ENCODE measurements at regions of chr13 and their contacts with region 1.

Region 1: GRCh38 chr13:52194184-52194868 is 34.9 kb upstream of the NEK3 start:
- DNase-seq: peak; percentile 79 to 92 (median 85)
- H3K4me3 ChIP-seq: peak overlapping the region; percentile 57 to 98 (median 88)
- H3K27ac ChIP-seq: peak overlapping the region; percentile 63 to 96 (median 92)
- H3K27me3 ChIP-seq: no peaks in the 10 kb centered on the region
- CTCF ChIP-seq: peak in 52 of 56 donors; percentile 11 to 67 (median 44)

Region 2: GRCh38 chr13:51814825-51815650 is 379.3 kb before region 1 on chr13:
- intact Hi-C with region 1: loop called in 1 of 2 experiments (anchors 10 kb)
- DNase-seq: peak in 4 of 10 donors; percentile 28 to 57 (median 52)
- H3K4me3 ChIP-seq: peak overlapping the region in 39 of 59 donors; percentile 3 to 48 (median 26)
- H3K27ac ChIP-seq: peak overlapping the region in 2 of 59 donors; percentile 10 to 46
- H3K27me3 ChIP-seq: no peaks in the 10 kb centered on the region
- CTCF ChIP-seq: peak; percentile 67 to 92 (median 83)

Region 3: GRCh38 chr13:51995677-51996551 is 198.4 kb before region 1 on chr13:
- intact Hi-C with region 1: no loop called
- DNase-seq: peak in 2 of 10 donors; percentile 30 to 34
- H3K4me3 ChIP-seq: peak overlapping the region in 6 of 59 donors; percentile 3 to 29 (median 10)
- H3K27ac ChIP-seq: peak overlapping the region in 32 of 59 donors; percentile 5 to 83 (median 52)
- H3K27me3 ChIP-seq: no peaks in the 10 kb centered on the region
- CTCF ChIP-seq: no peak

Region 4: DNA sequence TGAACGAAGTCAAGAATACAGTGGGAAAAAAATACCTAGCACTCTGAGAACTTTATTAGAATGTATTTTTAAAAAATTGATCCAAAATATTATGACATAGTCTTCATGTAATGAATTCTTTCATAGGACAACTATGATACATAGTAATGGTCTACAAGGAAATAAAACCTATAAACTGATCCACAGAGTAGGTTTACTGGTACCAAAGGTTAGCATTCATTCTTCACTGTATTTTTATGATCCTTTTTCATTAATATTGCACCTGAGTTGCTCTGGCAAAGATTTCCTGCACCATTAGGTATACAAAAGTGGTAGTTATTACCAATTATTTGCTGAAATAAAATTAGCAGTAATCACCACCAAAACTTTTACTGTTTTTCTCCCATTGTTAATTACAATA is 39.1 kb before region 1 on chr13:
- intact Hi-C with region 1: loop called in 1 of 2 experiments (anchors 1 kb)
- DNase-seq: no peak
- H3K4me3 ChIP-seq: no peak overlapping the region
- H3K27ac ChIP-seq: peak overlapping the region in 3 of 59 donors; percentile 14 to 96 (median 40)
- H3K27me3 ChIP-seq: no peaks in the 10 kb centered on the region
- CTCF ChIP-seq: no peak

Region 5: GRCh38 chr13:52371736-52372247 is 177.5 kb after region 1 on chr13:
- intact Hi-C with region 1: no loop called
- DNase-seq: no peak
- H3K4me3 ChIP-seq: no peak overlapping the region
- H3K27ac ChIP-seq: no peak overlapping the region
- H3K27me3 ChIP-seq: no peaks in the 10 kb centered on the region
- CTCF ChIP-seq: no peak